ENCODE measurements at regions of chr7 and their contacts with region 1.

Region 1: GRCh38 chr7:130961128-130961601 is 227.2 kb upstream of the KLF14 start:
- DNase-seq: peak; percentile 96
- H3K4me3 Mint-ChIP-seq: peak overlapping the region; percentile 88
- H3K27ac Mint-ChIP-seq: peak overlapping the region; percentile 97
- H3K4me1 Mint-ChIP-seq: peaks cover 36% of the 10 kb centered on the region
- H3K27me3 Mint-ChIP-seq: no peaks in the 10 kb centered on the region

Region 2: GRCh38 chr7:130182990-130183389 is 778.2 kb before region 1 on chr7:
- intact Hi-C with region 1: loop called (anchors 5 kb)
- DNase-seq: no peak
- H3K4me3 Mint-ChIP-seq: no peak overlapping the region
- H3K27ac Mint-ChIP-seq: peak overlapping the region; percentile 78
- H3K4me1 Mint-ChIP-seq: peaks cover 20% of the 10 kb centered on the region
- H3K27me3 Mint-ChIP-seq: no peaks in the 10 kb centered on the region

Region 3: DNA sequence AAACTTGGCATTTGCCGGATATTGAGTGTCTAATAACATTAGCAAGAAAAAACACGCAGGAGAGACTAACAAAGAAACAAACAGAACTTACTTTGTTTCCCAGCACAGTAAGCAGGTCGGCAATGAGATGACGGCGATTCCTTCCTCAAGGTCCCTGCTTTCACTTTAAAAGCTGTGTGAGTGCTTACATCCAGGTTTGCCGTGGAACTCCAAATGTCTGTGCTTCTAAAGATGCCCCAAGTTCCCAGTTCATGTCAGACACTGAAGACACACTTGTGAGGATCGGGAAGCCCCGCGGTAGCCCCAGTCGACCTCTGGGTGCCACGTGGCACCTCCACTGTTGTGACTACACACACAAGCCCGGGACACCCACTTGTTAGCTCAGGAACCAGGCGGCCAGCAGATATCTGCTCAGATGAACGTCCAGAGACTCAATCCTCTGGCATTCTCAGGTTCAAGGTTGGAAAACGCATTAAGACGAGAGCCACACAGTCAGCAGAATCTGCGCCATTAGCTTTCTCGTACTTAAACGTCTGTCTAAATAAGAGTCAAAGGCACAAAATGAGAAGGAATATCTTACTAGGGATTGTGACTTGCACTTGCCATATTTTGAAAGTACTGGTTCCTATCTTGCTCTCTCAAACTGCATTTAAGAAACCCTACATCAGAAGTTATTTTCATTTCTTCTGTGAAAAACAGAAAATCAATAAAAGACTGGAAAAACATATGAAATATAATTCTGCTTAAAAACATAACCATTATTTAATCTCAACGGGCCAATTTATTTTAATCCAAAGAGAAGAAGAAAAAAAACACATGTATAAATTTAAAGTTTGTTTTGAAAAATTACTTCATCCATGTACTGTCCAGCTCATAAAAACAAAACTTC is 19.6 kb before region 1 on chr7:
- intact Hi-C with region 1: loop called (anchors 1 kb)
- DNase-seq: peak; percentile 69
- H3K4me3 Mint-ChIP-seq: peak overlapping the region; percentile 86
- H3K27ac Mint-ChIP-seq: peak overlapping the region; percentile 90
- H3K4me1 Mint-ChIP-seq: peaks cover 80% of the 10 kb centered on the region
- H3K27me3 Mint-ChIP-seq: no peaks in the 10 kb centered on the region

Region 4: DNA sequence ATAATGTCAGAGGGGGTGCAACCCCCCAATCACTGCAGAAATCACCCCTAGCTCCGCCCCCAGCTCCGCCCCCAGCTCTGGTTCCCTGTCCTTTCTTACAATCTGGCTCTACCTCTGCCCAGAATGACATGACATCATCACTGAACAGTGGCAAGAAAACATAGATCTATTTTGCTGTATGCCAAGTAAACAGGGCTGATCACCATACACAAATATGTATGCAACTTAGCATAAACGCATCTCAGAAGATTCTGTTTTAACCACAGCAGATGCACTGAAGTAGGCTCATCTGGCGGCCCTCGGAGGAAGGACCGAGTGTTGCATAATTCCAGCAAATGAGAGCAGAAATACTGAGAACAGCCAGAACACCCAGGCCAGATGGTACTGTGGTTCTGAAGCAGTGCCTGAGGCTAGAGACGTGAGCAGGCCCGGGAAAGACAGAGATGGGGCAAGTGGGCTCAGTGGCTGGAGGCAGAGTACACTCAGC is 66.2 kb after region 1 on chr7:
- intact Hi-C with region 1: loop called (anchors 1 kb)
- DNase-seq: peak; percentile 76
- H3K4me3 Mint-ChIP-seq: peak overlapping the region; percentile 40
- H3K27ac Mint-ChIP-seq: peak overlapping the region; percentile 83
- H3K4me1 Mint-ChIP-seq: peaks cover 56% of the 10 kb centered on the region
- H3K27me3 Mint-ChIP-seq: no peaks in the 10 kb centered on the region

Region 5: DNA sequence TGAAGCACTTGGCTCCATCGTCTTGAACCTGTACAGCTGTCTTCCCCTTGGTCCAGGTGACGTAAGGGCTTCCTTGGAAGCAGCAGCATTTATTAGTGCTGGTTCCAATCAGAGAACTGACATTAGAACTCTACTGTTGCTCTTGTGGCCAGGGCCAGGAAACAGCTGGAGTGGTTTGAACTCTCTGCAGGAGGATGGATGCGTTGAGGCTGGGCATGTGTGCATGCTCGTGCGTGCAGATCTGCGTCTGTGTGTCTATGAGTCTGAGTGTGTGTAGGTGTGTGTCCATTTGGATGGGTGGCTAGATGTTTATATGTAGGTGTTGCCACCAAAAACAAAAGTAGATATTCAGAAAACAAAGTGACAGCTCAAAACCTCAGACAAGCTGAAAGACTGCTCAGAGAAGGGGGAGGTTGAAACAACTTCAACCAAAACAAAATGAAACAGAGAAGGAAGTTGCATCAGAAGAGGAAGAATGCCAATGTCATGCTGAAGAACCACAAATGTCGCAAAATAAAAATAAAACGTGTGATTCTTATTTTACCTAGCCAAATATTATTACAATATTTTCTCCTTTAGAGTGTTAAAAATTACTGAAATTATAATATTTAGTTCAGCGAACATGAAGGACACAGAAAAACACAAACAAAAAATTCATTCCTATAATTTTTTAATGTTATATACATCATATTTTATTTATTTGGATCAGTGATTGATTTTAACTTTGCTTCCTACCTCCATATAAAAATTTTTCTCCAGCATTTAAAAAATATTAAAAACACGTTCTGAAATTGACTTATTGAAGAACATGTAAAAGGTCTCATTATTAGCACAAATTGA is 270.4 kb after region 1 on chr7:
- intact Hi-C with region 1: loop called (anchors 5 kb)
- DNase-seq: peak; percentile 90
- H3K4me3 Mint-ChIP-seq: peak overlapping the region; percentile 72
- H3K27ac Mint-ChIP-seq: peak overlapping the region; percentile 87
- H3K4me1 Mint-ChIP-seq: peaks cover 59% of the 10 kb centered on the region
- H3K27me3 Mint-ChIP-seq: peaks cover 1% of the 10 kb centered on the region